ENCODE measurements at regions of chr2 and their contacts with region 1.

Region 1: GRCh38 chr2:43553341-43553855 is 42.4 kb downstream of the THADA start:
- DNase-seq: no peak
- H3K4me3 Mint-ChIP-seq: no peak overlapping the region
- H3K27ac Mint-ChIP-seq: no peak overlapping the region
- H3K4me1 Mint-ChIP-seq: peaks cover 11% of the 10 kb centered on the region
- H3K27me3 Mint-ChIP-seq: no peaks in the 10 kb centered on the region

Region 2: DNA sequence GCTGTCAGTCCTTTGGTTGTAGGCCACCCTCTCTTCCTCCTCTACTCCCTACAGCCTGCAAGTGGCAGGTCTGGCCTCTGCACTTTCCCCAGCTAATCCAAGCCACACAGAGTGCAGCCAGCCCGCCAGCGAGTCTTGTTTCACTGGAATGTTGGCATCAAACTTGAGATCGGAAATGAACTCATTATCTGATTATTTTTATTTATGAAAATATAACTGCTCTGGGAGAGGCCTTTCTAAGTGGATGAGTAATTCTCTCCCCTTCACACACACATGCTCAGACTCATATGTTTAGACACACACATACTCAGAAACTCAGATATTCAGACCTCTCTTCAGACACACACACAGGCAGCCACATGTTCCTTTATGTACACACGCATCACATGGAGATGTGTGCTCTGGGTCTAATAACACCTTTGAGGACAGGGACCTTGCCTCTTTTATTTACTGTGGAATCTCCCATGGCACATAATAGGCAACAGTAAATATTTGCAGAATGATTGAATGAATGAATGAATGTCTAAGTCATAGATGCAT is 478.3 kb before region 1 on chr2:
- intact Hi-C with region 1: no loop called
- DNase-seq: no peak
- H3K4me3 Mint-ChIP-seq: no peak overlapping the region
- H3K27ac Mint-ChIP-seq: no peak overlapping the region
- H3K4me1 Mint-ChIP-seq: peaks cover under 1% of the 10 kb centered on the region
- H3K27me3 Mint-ChIP-seq: no peaks in the 10 kb centered on the region

Region 3: DNA sequence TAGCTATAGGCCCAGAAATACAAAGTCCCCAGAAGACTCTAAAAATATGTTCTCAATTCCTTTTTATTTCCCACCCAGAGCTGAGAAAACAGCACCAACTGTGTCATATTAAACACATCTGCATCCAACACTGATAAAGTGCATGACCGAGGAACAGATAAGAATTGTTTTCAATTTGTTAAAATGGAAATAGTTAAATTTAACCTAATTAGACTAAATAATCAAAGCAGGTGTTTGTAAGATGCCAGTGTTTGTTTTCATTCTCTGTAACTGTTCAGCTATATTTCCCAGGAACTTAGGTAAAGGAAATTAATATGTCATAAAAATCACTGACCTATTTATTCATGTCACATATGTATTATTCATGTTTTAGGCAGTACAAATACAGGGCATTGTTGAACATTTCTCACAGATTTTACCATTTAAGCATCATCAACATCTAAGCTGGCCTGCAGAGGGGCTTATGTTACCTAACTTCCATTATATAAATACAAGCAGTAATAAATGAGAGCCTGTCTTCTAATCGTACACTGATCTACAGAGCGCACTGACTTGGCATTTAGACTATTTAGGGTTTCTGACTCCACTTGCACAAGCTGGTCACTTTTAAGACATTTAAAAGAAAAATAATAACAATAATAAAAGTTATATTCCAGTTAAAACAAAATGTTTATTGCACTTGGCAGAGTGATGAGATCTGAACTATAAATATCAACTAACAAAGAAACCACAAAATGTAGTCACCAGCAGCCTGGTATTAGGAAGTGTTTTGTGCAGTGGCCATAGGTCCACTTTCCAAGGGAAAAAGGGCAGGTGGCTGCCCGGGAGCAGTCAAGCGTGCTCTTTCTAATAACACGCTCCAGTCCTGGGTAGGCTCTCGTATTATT is 240.4 kb before region 1 on chr2:
- intact Hi-C with region 1: no loop called
- DNase-seq: no peak
- H3K4me3 Mint-ChIP-seq: no peak overlapping the region
- H3K27ac Mint-ChIP-seq: no peak overlapping the region
- H3K4me1 Mint-ChIP-seq: peaks cover 16% of the 10 kb centered on the region
- H3K27me3 Mint-ChIP-seq: no peaks in the 10 kb centered on the region

Region 4: GRCh38 chr2:43524177-43524965 is 29.0 kb before region 1 on chr2:
- intact Hi-C with region 1: loop called (anchors 2 kb)
- DNase-seq: no peak
- H3K4me3 Mint-ChIP-seq: no peak overlapping the region
- H3K27ac Mint-ChIP-seq: no peak overlapping the region
- H3K4me1 Mint-ChIP-seq: peaks cover 12% of the 10 kb centered on the region
- H3K27me3 Mint-ChIP-seq: no peaks in the 10 kb centered on the region

Region 5: GRCh38 chr2:43569921-43570320 is 16.5 kb after region 1 on chr2:
- intact Hi-C with region 1: no loop called
- DNase-seq: no peak
- H3K4me3 Mint-ChIP-seq: peak overlapping the region; percentile 31
- H3K27ac Mint-ChIP-seq: peak overlapping the region; percentile 91
- H3K4me1 Mint-ChIP-seq: peaks cover 44% of the 10 kb centered on the region
- H3K27me3 Mint-ChIP-seq: no peaks in the 10 kb centered on the region